Activated CD8-positive, alpha-beta T cell treated with anti-CD3 and anti-CD28 coated beads for 36 hours (primary cell): ENCODE measurements at regions of chr1 and their contacts with region 1.

Region 1: DNA sequence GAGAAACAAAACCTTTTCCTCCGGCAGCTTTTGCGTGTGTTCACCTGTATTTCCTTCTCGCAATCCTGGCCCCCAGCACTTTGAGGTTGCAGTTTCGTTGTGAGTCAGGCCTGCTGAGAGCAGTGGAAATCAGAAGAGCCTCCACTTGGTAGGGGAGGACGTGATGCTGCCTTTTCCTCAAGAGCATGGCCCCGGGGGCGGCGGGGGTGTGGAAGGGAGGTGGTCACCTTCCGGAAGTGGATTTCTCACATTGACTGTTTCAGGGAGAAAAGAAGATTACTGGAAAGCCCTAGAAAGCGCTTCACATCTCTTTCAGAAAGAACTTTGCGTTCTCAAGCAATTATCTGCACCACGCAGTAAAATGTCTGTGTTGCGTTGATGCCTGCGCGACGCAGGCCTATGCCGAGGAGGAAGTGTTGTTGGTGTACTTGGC is 12.2 kb upstream of the IL10 start:
- DNase-seq: peak; percentile 97
- ATAC-seq: peak; percentile 75
- H3K4me3 Mint-ChIP-seq: peak overlapping the region; percentile 11
- H3K27ac Mint-ChIP-seq: peak overlapping the region; percentile 78
- H3K4me1 Mint-ChIP-seq: peaks cover 65% of the 10 kb centered on the region
- H3K27me3 Mint-ChIP-seq: no peaks in the 10 kb centered on the region
- CTCF ChIP-seq: no peak

Region 2: GRCh38 chr1:206766251-206766856 is 18.1 kb before region 1 on chr1:
- CTCF ChIA-PET with region 1: interaction called, 51 read pairs
- POLR2A ChIA-PET with region 1: interaction called, 23 read pairs
- intact Hi-C with region 1: loop called (anchors 2 kb)
- DNase-seq: peak; percentile 87
- ATAC-seq: peak; percentile 75
- H3K4me3 Mint-ChIP-seq: peak overlapping the region; percentile 47
- H3K27ac Mint-ChIP-seq: peak overlapping the region; percentile 65
- H3K4me1 Mint-ChIP-seq: peaks cover 65% of the 10 kb centered on the region
- H3K27me3 Mint-ChIP-seq: peaks cover 3% of the 10 kb centered on the region
- CTCF ChIP-seq: no peak

Region 3: DNA sequence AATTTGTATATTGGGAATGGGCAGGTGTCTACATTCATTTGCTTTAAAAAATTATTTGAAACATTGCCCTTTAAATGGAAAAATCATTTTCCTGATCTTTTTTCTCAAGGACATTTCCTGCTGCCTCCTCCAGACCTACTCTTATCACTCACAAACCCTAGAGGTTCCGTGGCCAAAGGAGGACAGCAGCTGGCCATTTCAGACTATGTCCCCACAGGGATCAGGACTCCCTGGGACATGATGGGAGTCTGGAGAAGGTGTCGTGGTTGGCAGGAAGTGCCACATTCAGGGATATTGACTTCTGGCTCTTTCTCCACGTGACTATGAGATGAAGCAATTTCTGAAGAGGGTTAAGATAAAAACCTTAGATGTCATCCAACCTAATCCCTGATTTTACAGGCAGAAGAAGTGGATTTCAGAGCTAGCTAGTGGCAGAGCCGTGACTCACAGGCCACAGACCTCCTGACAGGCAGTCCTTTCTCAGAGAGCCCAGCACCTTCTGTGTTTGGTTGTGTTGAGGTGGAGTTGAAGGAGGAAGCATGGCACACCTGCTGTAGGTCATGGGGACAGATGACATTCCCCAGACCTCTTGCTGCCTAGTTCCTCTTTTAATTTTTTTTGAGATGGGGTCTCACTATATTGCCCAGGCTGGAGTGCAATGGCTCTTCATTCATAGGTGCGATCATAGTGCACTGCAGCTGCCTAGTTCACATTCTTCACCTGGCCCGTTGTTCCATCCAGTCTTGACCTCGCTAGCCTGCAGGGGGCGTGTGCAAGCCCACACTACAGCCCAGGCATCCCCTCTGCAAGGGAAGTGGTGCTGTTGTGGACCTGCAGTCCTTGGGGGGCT is 13.3 kb after region 1 on chr1:
- CTCF ChIA-PET with region 1: interaction called, 32 read pairs
- POLR2A ChIA-PET with region 1: interaction called, 19 read pairs
- intact Hi-C with region 1: loop called (anchors 2 kb)
- DNase-seq: peak; percentile 50
- ATAC-seq: no peak
- H3K4me3 Mint-ChIP-seq: no peak overlapping the region
- H3K27ac Mint-ChIP-seq: no peak overlapping the region
- H3K4me1 Mint-ChIP-seq: peaks cover 68% of the 10 kb centered on the region
- H3K27me3 Mint-ChIP-seq: no peaks in the 10 kb centered on the region
- CTCF ChIP-seq: peak; percentile 64

Region 4: DNA sequence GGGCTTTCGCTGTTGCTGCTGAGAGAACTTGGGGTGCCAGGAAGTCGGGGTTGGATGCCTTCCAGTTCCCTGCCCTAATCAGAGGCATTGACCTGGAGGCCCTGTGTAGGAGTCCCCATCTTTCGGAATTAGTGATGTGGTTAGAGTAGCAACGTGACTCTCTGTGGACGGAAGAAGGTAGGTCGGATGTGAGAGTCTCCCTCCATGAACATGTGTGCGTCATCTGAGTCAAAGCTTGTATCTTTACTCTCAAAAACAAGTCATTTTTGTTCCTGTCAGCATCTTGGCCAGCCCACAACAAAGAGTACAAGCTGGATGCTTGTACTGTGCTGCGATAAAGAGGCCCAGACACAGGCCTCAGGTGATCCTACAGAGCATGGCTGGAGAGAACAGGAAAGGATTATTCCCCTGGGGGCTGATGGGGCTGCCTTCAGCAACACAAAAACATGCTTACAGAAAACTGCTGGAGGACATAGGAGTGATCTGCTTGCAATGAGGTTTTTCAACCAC is 18.8 kb after region 1 on chr1:
- CTCF ChIA-PET with region 1: interaction called, 32 read pairs
- POLR2A ChIA-PET with region 1: interaction called, 19 read pairs
- intact Hi-C with region 1: loop called (anchors 2 kb)
- DNase-seq: peak; percentile 91
- ATAC-seq: peak; percentile 92
- H3K4me3 Mint-ChIP-seq: peak overlapping the region; percentile 6
- H3K27ac Mint-ChIP-seq: peak overlapping the region; percentile 76
- H3K4me1 Mint-ChIP-seq: peaks cover 76% of the 10 kb centered on the region
- H3K27me3 Mint-ChIP-seq: no peaks in the 10 kb centered on the region
- CTCF ChIP-seq: no peak